Dorsolateral prefrontal cortex (tissue), 120 donors: ENCODE measurements at regions of chr16 and their contacts with region 1.

Region 1: GRCh38 chr16:84186685-84187437 is at the start of gene TAF1C:
- DNase-seq: peak; percentile 83 to 93 (median 90)
- H3K4me3 ChIP-seq: peak within 1 kb of the TSS; percentile 55 to 100 (median 96)
- H3K27ac ChIP-seq: peak within 1 kb of the TSS in 51 of 59 donors; percentile 1 to 91 (median 77)
- H3K27me3 ChIP-seq: no peaks in the 10 kb centered on the region
- CTCF ChIP-seq: peak; percentile 85 to 99 (median 97)
- total RNA-seq, gene TAF1C: 33.5 to 87.0 (median 56.1) TPM

Region 2: GRCh38 chr16:83826146-83826913 is 360.5 kb before region 1 on chr16:
- intact Hi-C with region 1: no loop called
- DNase-seq: peak; percentile 63 to 91 (median 84)
- H3K4me3 ChIP-seq: peak overlapping the region in 3 of 59 donors; percentile 2 to 9 (median 2)
- H3K27ac ChIP-seq: peak overlapping the region in 7 of 59 donors; percentile 4 to 62 (median 38)
- H3K27me3 ChIP-seq: no peaks in the 10 kb centered on the region
- CTCF ChIP-seq: peak; percentile 79 to 99 (median 95)

Region 3: DNA sequence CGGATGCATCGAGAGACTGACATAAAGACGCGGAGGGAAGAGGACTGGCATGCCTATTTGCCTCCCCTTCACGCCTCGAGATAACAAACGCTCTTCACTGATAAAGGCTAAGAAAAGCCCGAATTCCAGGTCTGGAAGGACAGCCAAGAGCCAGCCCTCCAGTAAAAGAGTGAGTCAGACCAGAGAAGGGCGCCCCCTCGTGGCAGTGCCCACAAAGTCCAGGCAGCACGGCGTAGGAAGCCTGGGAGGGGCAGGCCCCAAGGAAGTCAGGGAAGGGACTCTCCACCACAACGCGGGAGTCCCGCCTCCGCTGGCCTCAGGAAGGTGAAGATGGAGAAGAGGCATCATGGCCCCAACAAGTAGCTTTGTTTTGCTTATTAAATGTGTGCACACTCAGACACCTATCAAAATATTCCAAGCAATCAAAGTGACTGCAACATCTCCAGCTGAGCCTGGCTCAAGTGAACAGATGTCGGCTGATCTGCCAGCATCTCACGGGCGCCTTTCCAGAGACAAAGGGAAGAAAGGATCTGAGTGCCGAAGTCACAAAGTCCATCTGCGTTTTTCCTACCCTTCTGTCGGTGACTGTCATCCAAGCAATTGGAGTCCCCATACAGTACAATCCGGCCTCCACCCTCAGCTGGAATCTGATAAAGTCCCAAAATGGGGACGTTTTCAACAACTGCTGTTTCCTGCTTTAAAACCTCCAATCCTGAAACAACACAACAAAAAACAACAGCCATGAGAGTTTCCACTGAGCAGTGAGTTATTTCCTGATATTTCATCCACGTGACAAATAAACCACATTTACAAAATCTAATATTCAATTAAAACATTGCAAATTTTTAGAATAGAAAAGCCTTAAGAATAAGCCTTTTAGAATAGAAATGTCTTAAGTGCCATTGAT is 123.9 kb before region 1 on chr16:
- intact Hi-C with region 1: loop called in 1 of 2 experiments (anchors 5 kb)
- DNase-seq: peak; percentile 69 to 84 (median 82)
- H3K4me3 ChIP-seq: no peak overlapping the region
- H3K27ac ChIP-seq: peak overlapping the region in 39 of 59 donors; percentile 2 to 68 (median 27)
- H3K27me3 ChIP-seq: no peaks in the 10 kb centered on the region
- CTCF ChIP-seq: peak; percentile 78 to 98 (median 89)

Region 4: DNA sequence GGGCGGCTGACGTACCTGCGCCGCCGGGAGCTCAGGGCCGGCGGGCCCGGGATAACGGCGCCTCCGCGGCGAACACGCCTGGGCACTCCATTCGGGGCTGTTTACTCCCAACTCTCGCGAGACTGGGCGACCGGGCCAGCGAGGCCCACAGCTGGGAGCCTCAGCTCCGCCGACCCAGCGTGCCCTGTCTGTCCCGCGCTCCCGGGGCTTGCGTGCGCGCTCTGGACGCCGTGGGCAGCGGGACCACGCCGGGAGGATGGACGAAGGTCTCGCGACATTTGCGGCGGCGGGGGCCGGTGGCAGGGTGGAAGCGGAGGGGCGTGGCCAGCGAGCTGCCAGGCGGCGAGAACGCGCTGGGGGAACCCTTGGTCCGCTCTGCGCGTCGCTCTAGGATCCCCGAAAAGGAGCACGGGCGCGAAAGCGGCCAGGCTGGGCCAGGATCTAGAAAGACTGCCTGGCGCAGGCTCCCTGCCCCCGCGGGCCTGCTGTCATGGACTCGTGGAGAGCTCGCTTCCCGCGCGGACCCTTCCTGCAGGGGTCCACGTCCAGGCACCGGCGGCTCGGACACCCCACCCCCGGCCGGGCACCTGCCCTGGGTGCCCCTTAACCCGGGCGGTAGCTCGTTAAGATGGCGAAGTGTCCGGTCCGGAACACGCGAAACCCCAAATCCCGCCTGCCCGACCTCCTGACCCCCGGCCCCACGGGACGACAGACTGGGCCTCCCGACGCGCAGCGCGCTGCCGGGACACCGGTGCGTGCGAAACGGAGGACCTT is 70.0 kb before region 1 on chr16 and contains the start of gene MBTPS1:
- intact Hi-C with region 1: loop called in 1 of 2 experiments (anchors 10 kb)
- DNase-seq: peak; percentile 91 to 99 (median 97)
- H3K4me3 ChIP-seq: peak within 1 kb of the TSS; percentile 56 to 100 (median 95)
- H3K27ac ChIP-seq: peak within 1 kb of the TSS; percentile 30 to 98 (median 92)
- H3K27me3 ChIP-seq: no peaks in the 10 kb centered on the region
- CTCF ChIP-seq: peak in 39 of 56 donors; percentile 2 to 80 (median 34)
- total RNA-seq, gene MBTPS1: 70.0 to 125 (median 95.6) TPM

Region 5: GRCh38 chr16:84175350-84176081 is 11.3 kb before region 1 on chr16:
- intact Hi-C with region 1: loop called in 1 of 2 experiments (anchors 1 kb)
- DNase-seq: peak in 7 of 10 donors; percentile 31 to 70 (median 57)
- H3K4me3 ChIP-seq: no peak overlapping the region
- H3K27ac ChIP-seq: peak overlapping the region in 51 of 59 donors; percentile 2 to 94 (median 87)
- H3K27me3 ChIP-seq: no peaks in the 10 kb centered on the region
- CTCF ChIP-seq: peak in 45 of 56 donors; percentile 12 to 87 (median 58)

Region 6: DNA sequence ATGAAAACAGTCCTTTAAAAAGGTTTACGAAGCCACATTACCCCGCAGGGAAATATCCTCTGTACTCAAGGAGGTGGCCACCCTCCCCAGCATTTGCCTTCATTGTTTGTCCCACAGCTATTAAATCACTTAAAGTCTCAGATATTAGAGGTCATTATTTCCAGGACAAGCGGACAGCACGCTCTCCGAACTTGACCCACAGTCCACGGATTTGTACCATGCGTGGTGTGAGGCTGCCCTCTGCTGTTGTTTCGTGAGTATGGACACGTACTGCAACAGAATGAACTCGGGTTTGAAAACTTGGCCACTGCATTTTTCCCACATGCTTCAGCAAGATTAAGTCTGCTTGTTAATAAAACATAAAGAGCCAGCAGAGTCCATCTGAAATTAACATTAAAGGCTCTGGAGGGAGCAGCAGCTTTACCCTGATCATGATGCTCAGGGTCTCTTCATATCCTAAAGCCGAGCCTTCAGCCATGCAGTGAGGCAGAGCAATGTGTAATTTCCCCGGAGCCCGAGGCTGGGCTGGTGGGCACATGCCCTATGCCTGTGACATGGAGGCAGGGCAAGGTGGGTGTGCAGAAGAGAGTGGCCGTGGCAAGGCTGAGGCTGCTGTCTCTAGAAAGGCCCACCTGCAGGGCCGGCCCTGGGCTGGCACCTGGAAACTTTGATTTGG is 297.9 kb after region 1 on chr16:
- intact Hi-C with region 1: loop called (anchors 5 to 10 kb)
- DNase-seq: peak; percentile 68 to 89 (median 78)
- H3K4me3 ChIP-seq: peak overlapping the region in 1 of 59 donors; percentile 32
- H3K27ac ChIP-seq: peak overlapping the region in 23 of 59 donors; percentile 5 to 72 (median 52)
- H3K27me3 ChIP-seq: no peaks in the 10 kb centered on the region
- CTCF ChIP-seq: peak; percentile 64 to 96 (median 88)